Posterior vena cava (tissue), 2 donors: ENCODE measurements at regions of chr17 and their contacts with region 1.

Region 1: GRCh38 chr17:6761779-6762178 is 5.9 kb downstream of the XAF1 start:
- DNase-seq: no peak

Region 2: GRCh38 chr17:6660805-6661463 is 100.8 kb before region 1 on chr17:
- intact Hi-C with region 1: no loop called
- DNase-seq: no peak

Region 3: GRCh38 chr17:6701719-6702118 is 60.1 kb before region 1 on chr17:
- intact Hi-C with region 1: loop called in 1 of 2 experiments (anchors 10 kb)
- DNase-seq: no peak